MCF 10A (cell line): ENCODE measurements at regions of chr18 and their contacts with region 1.

Region 1: GRCh38 chr18:12657684-12658425 is at the start of gene SPIRE1:
- DNase-seq: peak; percentile 68
- H3K4me3 Mint-ChIP-seq: peak within 1 kb of the TSS; percentile 86
- H3K27ac Mint-ChIP-seq: peak within 1 kb of the TSS; percentile 81
- H3K4me1 Mint-ChIP-seq: peaks cover 31% of the 10 kb centered on the region
- H3K27me3 Mint-ChIP-seq: no peaks in the 10 kb centered on the region
- CTCF ChIP-seq: no peak
- total RNA-seq, gene SPIRE1: 64.8 and 78.2 TPM in 2 replicates

Region 2: DNA sequence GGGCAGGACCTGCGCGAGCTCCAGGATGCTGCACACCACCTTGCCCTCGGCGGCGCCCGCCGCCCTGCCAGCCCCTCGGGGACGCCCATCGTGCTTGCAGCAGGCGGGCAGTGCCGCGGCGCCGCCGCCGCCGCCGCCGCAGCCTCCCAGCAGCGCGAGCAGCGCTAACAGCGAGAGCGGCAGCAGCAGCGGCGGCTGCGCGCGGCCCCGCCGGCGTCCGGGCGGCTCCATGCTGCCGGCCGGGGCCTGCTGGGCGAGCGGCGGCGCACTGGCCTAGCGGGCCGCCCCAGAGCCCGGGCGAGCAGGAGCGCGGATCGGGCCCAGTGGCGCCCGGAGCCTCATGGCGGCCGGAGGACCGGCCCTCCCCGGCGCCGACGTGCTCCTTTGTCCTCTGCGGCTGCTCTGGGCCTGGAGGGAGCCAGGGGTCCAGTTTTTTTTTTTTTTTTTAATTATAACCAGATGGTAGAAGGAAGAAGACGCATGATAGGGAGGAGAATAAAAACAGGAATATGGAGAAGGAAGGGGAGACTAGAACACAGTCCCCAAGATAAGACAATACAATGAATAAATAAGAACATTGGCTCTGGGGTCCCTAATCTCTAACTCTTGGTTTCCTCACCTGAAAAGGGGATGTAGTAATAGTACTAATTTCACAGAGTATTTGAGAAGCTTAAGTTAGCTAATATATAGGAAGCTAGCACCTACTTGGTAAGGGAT is 581.3 kb before region 1 on chr18:
- CTCF ChIA-PET with region 1: no interaction called
- POLR2A ChIA-PET with region 1: no interaction called
- intact Hi-C with region 1: no loop called
- DNase-seq: no peak
- H3K4me3 Mint-ChIP-seq: no peak overlapping the region
- H3K27ac Mint-ChIP-seq: no peak overlapping the region
- H3K4me1 Mint-ChIP-seq: peaks cover 5% of the 10 kb centered on the region
- H3K27me3 Mint-ChIP-seq: no peaks in the 10 kb centered on the region
- CTCF ChIP-seq: no peak

Region 3: DNA sequence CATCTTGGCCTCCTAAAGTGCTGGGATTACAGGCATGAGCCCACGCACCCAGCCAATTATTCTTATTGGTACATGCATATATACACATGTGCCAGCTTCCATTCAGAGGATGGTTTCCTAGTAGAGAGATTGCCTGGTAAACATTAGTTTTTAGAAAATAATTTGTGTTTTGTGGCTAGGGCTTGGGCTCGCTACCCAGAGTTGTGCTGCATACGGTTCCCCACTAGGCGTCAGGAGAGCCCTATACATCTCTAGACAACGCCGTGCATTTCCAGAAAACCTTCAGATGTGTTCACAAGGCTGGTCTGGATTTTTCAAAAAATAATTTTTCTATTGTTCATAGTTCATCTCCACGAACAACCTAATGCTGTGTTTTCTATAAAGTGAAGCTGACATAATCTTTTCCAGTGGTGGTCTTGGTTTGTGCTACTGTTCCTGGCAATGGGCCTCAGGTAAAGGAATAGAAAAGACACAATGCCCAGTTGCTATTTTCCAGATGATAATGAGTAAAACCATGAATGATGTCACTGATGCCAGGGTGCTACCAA is 266.2 kb before region 1 on chr18:
- CTCF ChIA-PET with region 1: interaction called, 127 read pairs
- POLR2A ChIA-PET with region 1: interaction called, 26 read pairs
- intact Hi-C with region 1: loop called (anchors 1 kb)
- DNase-seq: peak; percentile 75
- H3K4me3 Mint-ChIP-seq: no peak overlapping the region
- H3K27ac Mint-ChIP-seq: no peak overlapping the region
- H3K4me1 Mint-ChIP-seq: peaks cover 6% of the 10 kb centered on the region
- H3K27me3 Mint-ChIP-seq: no peaks in the 10 kb centered on the region
- CTCF ChIP-seq: peak; percentile 91

Region 4: GRCh38 chr18:12451428-12451827 is 206.4 kb before region 1 on chr18:
- CTCF ChIA-PET with region 1: interaction called, 7 read pairs
- POLR2A ChIA-PET with region 1: interaction called, 3 read pairs
- intact Hi-C with region 1: loop called (anchors 5 kb)
- DNase-seq: no peak
- H3K4me3 Mint-ChIP-seq: no peak overlapping the region
- H3K27ac Mint-ChIP-seq: no peak overlapping the region
- H3K4me1 Mint-ChIP-seq: no peaks in the 10 kb centered on the region
- H3K27me3 Mint-ChIP-seq: no peaks in the 10 kb centered on the region
- CTCF ChIP-seq: no peak

Region 5: DNA sequence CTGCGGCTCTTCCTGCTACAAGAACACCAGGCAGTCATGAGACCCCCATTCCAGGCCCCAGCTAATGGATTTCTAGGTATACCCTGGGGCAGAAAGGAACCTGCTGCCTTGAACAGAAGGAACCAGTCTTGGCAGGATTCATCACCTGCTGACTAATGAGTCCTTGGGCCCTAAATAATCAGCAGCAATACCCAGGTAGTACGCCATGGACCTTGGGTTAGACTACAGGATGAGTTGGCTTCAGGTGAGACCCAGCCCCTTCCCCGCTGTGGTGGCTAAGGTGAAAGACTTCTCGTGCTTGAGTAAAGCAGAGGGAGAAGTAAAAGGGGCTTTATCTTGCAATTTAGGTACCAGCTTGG is 105.0 kb before region 1 on chr18:
- CTCF ChIA-PET with region 1: no interaction called
- POLR2A ChIA-PET with region 1: interaction called, 9 read pairs
- intact Hi-C with region 1: loop called (anchors 5 kb)
- DNase-seq: peak; percentile 88
- H3K4me3 Mint-ChIP-seq: peak overlapping the region; percentile 12
- H3K27ac Mint-ChIP-seq: peak overlapping the region; percentile 89
- H3K4me1 Mint-ChIP-seq: peaks cover 40% of the 10 kb centered on the region
- H3K27me3 Mint-ChIP-seq: no peaks in the 10 kb centered on the region
- CTCF ChIP-seq: no peak

Region 6: DNA sequence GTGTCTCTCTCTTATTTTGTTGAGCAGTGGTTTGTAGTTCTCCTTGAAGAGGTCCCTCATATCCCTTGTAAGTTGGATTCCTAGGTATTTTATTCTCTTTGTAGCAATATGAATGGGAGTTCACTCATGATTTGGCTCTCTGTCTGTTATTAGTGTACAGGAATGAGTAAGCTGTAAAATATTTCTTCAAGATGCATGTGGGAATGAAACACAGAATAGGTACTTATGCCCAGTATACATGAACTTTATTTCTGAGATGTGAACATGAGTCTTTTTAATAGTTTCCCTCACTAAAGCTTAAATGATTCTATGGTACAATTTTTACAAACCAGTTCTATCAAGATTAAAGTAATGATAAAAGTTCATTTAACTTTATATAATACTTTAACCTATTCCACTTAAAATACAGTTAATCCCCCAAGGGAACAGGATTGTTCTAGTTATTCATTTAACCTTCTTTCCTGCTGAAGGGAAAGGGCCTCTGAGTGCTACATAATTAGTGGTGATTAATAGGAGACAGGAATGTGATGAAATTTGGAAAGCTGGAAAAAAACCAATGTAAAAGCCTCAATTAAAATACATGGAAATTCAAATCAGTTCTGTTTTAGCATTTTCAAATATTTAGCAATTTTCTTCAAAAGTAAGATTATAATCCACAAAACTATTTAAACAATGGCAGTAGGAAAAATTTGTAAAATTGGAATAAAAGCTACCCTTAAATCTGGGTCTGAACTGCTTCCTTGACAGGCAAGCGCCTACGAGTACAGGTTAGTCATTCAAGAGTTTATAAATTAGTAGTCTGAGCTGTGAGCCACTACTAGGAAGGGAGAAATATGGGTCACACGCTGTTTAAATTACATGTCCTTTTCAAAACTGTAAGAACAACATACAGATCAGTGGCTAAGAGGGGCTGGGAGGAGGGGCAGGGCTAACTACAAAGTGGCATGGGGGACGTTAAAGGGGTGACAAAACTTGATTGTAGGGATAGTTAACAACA is 28.9 kb before region 1 on chr18:
- CTCF ChIA-PET with region 1: no interaction called
- POLR2A ChIA-PET with region 1: interaction called, 14 read pairs
- intact Hi-C with region 1: no loop called
- DNase-seq: peak; percentile 52
- H3K4me3 Mint-ChIP-seq: no peak overlapping the region
- H3K27ac Mint-ChIP-seq: peak overlapping the region; percentile 71
- H3K4me1 Mint-ChIP-seq: peaks cover 26% of the 10 kb centered on the region
- H3K27me3 Mint-ChIP-seq: no peaks in the 10 kb centered on the region
- CTCF ChIP-seq: no peak

Region 7: GRCh38 chr18:12645254-12646203 is 12.3 kb before region 1 on chr18:
- CTCF ChIA-PET with region 1: interaction called, 3 read pairs
- POLR2A ChIA-PET with region 1: interaction called, 14 read pairs
- intact Hi-C with region 1: no loop called
- DNase-seq: no peak
- H3K4me3 Mint-ChIP-seq: no peak overlapping the region
- H3K27ac Mint-ChIP-seq: no peak overlapping the region
- H3K4me1 Mint-ChIP-seq: peaks cover 32% of the 10 kb centered on the region
- H3K27me3 Mint-ChIP-seq: no peaks in the 10 kb centered on the region
- CTCF ChIP-seq: no peak

Region 8: GRCh38 chr18:12694032-12694431 is 36.2 kb after region 1 on chr18:
- CTCF ChIA-PET with region 1: no interaction called
- POLR2A ChIA-PET with region 1: no interaction called
- intact Hi-C with region 1: no loop called
- DNase-seq: no peak
- H3K4me3 Mint-ChIP-seq: no peak overlapping the region
- H3K27ac Mint-ChIP-seq: peak overlapping the region; percentile 6
- H3K4me1 Mint-ChIP-seq: peaks cover 20% of the 10 kb centered on the region
- H3K27me3 Mint-ChIP-seq: no peaks in the 10 kb centered on the region
- CTCF ChIP-seq: no peak